BJ (cell line): ENCODE measurements at regions of chr10 and their contacts with region 1.

Region 1: DNA sequence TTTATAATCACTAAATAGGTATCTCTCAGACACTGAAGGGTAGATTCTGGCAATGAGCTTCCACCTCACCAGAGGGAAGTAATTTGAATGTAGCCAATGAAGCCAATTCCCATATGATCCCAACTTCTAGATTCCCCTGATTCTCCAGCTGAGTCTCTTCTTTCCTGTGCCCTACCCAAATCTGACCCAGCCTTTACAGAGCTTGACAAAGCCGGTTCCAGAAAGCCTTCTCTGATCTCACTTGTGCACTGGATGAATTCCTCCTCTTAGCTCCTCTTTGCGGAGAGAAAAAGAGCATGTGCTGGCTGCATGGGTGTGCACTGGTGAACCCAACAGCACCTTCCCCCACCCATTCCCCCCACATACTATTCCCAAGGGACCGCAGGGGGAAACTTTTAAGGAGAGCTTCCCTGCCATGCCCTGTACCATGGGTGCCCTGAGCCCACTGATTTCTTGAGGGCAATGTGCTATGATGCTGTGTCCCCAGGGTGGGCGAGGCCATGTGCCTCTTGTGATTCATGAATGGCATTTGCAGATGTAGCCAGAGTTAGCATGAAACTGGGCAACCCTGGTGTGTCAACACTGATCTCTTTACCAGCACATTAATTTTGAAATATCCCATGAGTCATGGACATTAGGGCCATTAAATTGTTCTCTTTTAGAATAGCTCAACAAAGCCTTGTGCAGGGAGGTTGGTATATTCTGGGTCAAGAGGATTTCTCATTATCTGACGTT is 50.4 kb upstream of the PLEKHA1 start:
- DNase-seq: no peak
- H3K4me3 ChIP-seq: no peak overlapping the region
- H3K27me3 ChIP-seq: peaks cover 3% of the 10 kb centered on the region; the same call in 1 of the 2 replicates
- CTCF ChIP-seq: no peak

Region 2: GRCh38 chr10:121848080-121848479 is 476.0 kb before region 1 on chr10:
- CTCF ChIA-PET with region 1: no interaction called
- POLR2A ChIA-PET with region 1: interaction called, 14 read pairs
- DNase-seq: no peak
- H3K4me3 ChIP-seq: no peak overlapping the region
- H3K27me3 ChIP-seq: no peaks in the 10 kb centered on the region
- CTCF ChIP-seq: no peak